ENCODE measurements at regions of chr7 and their contacts with region 1.

Region 1: DNA sequence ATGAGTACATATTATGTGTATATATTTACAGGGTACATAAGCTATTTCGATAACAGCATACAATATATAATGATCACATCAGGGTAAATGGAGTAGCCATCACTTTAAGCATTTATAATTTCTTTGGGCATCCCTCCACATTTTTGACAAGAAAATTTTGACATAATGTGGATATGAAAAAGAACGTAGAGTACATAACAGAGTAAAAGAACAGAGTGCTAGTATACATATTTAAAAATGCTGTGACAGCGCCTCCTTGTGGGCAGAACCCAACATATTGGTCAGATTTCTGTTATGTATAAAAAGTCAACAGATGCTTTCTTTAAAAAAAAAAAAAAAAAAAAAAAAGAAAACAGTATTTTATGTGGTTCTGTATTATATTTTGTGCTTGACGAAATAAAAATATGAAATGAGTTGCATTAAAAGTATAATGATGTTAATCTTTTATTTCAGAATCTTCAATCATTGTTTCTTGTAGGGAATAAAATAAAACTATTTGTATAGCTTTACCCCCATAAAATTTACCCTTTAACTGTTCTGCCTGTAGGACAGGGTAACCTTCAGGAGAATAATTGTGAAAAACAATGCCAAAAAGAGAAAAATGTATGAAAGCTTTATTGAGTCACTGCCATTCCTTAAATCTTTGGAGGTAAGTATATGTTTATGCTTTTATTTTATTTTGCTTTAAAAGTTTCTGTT is 18.3 kb upstream of the HBP1 start:
- DNase-seq: peak in 2 of 3 donors; percentile 51 to 96
- ATAC-seq: peak; percentile 75
- H3K4me3 ChIP-seq: no peak overlapping the region
- H3K4me1 ChIP-seq: no peaks in the 10 kb centered on the region
- CTCF ChIP-seq: peak; percentile 24

Region 2: DNA sequence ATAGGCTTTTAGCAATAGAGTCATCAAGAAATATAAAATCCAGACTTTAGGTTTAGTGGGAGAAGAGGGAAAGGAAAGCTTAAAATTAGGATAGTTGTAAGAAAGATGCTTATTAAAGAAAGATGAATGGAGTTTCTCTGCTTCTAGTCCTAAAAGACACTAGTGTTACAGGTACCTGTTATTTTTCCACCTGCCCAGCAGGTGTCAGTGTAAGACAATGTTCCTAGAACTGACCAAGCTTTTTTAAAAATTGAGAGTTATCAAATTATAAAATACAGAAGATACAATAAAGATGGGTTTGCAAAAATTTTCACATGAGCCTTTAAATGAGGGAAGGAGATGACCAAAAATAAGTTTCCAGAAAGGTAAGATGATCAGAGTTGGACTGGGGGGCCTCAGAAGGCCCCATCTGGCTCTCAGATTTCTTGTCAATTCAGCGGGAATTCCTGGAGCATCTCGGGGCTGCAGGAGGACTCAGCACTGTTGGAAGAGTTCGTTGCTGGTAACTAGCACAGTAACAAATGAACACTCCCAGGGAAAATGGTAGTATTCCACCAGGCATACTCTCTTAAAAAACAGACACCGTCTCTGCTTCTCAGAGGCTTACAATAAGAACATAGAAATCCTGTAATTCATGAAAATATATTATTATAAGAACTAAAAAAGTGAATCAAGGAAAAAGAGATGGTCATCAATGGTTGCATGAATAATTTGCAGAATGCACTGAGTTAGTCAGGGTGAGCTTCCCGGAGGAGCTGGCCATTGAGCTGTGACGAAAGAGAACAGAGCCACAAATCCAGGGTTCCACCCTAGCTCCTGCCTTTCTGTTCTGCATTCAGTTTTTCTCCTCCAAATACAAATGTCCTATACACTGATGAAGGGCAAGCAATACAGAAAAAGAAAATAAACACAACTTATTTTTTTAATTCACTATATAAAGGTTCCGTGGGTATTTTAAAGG is 357.2 kb before region 1 on chr7:
- intact Hi-C with region 1: loop called in 1 of 2 experiments (anchors 10 kb)
- DNase-seq: no peak
- ATAC-seq: peak; percentile 66
- H3K4me3 ChIP-seq: no peak overlapping the region
- H3K4me1 ChIP-seq: no peaks in the 10 kb centered on the region
- CTCF ChIP-seq: peak; percentile 20

Region 3: DNA sequence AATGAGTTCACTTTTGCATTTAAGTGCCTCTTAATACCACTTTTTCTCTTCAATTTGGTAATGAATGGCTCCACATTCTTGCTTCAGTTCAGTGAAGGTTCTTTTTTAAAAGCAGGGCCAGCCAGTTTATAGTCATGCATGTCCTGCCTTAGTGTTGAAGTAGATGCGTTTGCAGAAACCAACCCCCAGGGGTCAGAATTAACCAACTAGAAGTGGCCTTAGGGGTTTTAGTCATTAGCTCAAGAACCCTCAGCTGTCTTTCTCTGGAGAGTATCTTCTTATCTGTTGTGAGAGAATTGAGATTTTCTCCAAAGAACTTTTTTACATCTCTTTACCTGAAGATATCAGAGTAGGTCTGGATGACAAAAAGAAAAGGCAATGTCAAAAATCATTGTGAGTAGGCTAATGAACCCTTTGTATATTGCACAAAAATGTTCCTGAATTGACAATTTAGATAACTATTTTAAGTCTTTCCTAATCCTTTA is 203.2 kb before region 1 on chr7:
- intact Hi-C with region 1: loop called (anchors 5 kb)
- DNase-seq: peak in 1 of 3 donors; percentile 72
- ATAC-seq: peak; percentile 59
- H3K4me3 ChIP-seq: no peak overlapping the region
- H3K4me1 ChIP-seq: no peaks in the 10 kb centered on the region
- CTCF ChIP-seq: no peak

Region 4: GRCh38 chr7:107090457-107090856 is 60.1 kb before region 1 on chr7:
- intact Hi-C with region 1: no loop called
- DNase-seq: no peak
- ATAC-seq: no peak
- H3K4me3 ChIP-seq: no peak overlapping the region
- H3K4me1 ChIP-seq: no peaks in the 10 kb centered on the region
- CTCF ChIP-seq: no peak